Activated B cell treated with CpG ODN at 0.5 μM for 24 hours (primary cell): ENCODE measurements at regions of chr12 and their contacts with region 1.

Region 1: DNA sequence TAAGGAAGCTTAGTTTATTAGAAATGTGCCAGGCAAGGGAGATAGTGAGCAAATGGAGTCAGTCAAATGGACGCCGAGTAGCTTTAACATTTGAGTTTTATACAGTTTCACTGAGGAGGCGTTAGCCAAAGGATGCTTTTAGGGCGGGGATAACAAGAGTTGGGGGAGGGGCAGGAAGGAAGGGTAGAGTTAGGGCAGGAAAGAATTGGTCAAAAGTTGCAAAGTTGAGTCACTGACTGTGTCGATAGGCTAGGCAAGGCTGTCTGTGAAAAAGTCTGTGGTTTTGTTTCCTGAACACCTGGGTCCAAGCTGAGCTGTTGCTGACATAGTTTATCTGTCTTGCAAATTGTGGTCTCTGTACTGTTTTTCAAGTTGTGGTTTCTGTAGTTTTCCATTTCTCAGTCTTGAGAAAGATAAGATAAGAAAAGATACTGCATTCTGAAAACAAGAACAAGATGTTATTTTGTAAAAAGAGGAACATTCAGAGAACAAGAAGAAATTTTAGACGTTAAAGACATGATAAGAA is 62.6 kb upstream of the RESF1 start:
- DNase-seq: peak; percentile 58
- ATAC-seq: peak; percentile 93
- H3K4me3 Mint-ChIP-seq: peak overlapping the region; percentile 73
- H3K27ac Mint-ChIP-seq: peak overlapping the region; percentile 96
- H3K4me1 Mint-ChIP-seq: peaks cover 69% of the 10 kb centered on the region
- H3K27me3 Mint-ChIP-seq: no peaks in the 10 kb centered on the region
- CTCF ChIP-seq: no peak

Region 2: GRCh38 chr12:31715283-31715825 is 181.2 kb before region 1 on chr12:
- CTCF ChIA-PET with region 1: no interaction called
- POLR2A ChIA-PET with region 1: interaction called, 22 read pairs
- intact Hi-C with region 1: no loop called
- DNase-seq: no peak
- ATAC-seq: peak; percentile 93
- H3K4me3 Mint-ChIP-seq: peak overlapping the region; percentile 32
- H3K27ac Mint-ChIP-seq: peak overlapping the region; percentile 85
- H3K4me1 Mint-ChIP-seq: peaks cover 58% of the 10 kb centered on the region
- H3K27me3 Mint-ChIP-seq: no peaks in the 10 kb centered on the region
- CTCF ChIP-seq: no peak

Region 3: DNA sequence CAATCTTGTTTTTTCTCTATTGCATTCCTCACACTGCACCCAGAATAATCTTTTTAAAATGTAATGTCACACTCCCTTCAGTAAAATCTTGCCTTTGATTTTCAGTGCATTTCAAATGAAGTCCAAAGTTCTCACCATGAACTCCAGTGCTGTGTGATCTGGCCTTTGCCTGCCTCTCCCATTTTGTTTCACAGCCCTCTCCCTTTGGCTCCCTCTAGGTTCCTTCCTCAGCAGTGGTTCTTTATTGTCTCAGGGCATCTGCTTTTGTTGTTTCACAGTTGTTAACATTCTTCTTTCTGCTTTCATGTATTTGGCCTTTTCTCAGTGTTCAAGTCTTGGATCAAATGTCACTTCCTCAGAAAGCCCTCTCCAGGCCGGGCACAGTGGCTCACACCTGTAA is 83.3 kb before region 1 on chr12:
- CTCF ChIA-PET with region 1: no interaction called
- POLR2A ChIA-PET with region 1: interaction called, 41 read pairs
- intact Hi-C with region 1: loop called (anchors 1 kb)
- DNase-seq: no peak
- ATAC-seq: no peak
- H3K4me3 Mint-ChIP-seq: no peak overlapping the region
- H3K27ac Mint-ChIP-seq: peak overlapping the region; percentile 69
- H3K4me1 Mint-ChIP-seq: peaks cover 45% of the 10 kb centered on the region
- H3K27me3 Mint-ChIP-seq: no peaks in the 10 kb centered on the region
- CTCF ChIP-seq: no peak

Region 4: GRCh38 chr12:31859232-31859977 is 37.2 kb before region 1 on chr12:
- CTCF ChIA-PET with region 1: interaction called, 3 read pairs
- POLR2A ChIA-PET with region 1: interaction called, 9 read pairs
- intact Hi-C with region 1: loop called (anchors 1 kb)
- DNase-seq: peak; percentile 35
- ATAC-seq: peak; percentile 93
- H3K4me3 Mint-ChIP-seq: peak overlapping the region; percentile 61
- H3K27ac Mint-ChIP-seq: peak overlapping the region; percentile 87
- H3K4me1 Mint-ChIP-seq: peaks cover 31% of the 10 kb centered on the region
- H3K27me3 Mint-ChIP-seq: no peaks in the 10 kb centered on the region
- CTCF ChIP-seq: no peak

Region 5: DNA sequence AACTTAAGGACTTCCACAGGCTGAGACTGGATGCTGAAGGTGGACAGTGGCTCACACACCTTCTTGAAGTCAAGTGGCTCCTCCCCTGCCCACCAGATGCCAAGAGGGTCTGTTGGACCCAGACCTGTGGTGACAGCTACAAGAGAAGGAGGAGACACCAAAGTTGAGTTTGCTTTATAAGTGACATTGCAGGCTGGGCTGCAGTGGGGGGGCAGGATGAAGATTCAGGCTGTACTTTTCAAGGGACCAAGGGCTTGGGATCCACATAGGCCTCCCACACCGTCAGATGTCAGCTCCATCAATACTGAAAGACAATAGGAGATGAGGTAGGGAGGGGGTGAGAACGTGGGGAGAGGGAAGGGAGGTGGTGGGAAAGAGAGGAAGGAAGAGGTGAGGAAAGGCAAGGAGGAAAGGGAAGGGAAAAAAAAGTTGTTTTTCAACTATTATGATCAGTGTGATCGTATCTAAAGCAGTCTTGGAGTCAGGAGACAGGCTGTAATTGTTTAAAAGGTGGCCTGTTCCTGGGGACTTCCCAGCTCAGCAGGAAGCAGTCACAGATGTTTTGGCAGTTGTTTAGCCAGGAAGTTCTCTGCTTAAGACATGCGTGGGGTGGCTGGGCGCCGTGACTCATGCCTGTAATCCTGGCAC is 21.5 kb before region 1 on chr12:
- CTCF ChIA-PET with region 1: interaction called, 5 read pairs
- POLR2A ChIA-PET with region 1: interaction called, 58 read pairs
- intact Hi-C with region 1: loop called (anchors 1 kb)
- DNase-seq: peak; percentile 45
- ATAC-seq: peak; percentile 85
- H3K4me3 Mint-ChIP-seq: peak overlapping the region; percentile 77
- H3K27ac Mint-ChIP-seq: peak overlapping the region; percentile 100
- H3K4me1 Mint-ChIP-seq: peaks cover 77% of the 10 kb centered on the region
- H3K27me3 Mint-ChIP-seq: no peaks in the 10 kb centered on the region
- CTCF ChIP-seq: no peak

Region 6: GRCh38 chr12:31928246-31929026 is 31.9 kb after region 1 on chr12:
- CTCF ChIA-PET with region 1: no interaction called
- POLR2A ChIA-PET with region 1: interaction called, 10 read pairs
- intact Hi-C with region 1: loop called (anchors 2 kb)
- DNase-seq: no peak
- ATAC-seq: peak; percentile 49
- H3K4me3 Mint-ChIP-seq: peak overlapping the region; percentile 83
- H3K27ac Mint-ChIP-seq: peak overlapping the region; percentile 92
- H3K4me1 Mint-ChIP-seq: peaks cover 36% of the 10 kb centered on the region
- H3K27me3 Mint-ChIP-seq: no peaks in the 10 kb centered on the region
- CTCF ChIP-seq: no peak

Region 7: GRCh38 chr12:31973818-31974217 is 77.2 kb after region 1 on chr12:
- CTCF ChIA-PET with region 1: no interaction called
- POLR2A ChIA-PET with region 1: no interaction called
- intact Hi-C with region 1: no loop called
- DNase-seq: no peak
- ATAC-seq: no peak
- H3K4me3 Mint-ChIP-seq: no peak overlapping the region
- H3K27ac Mint-ChIP-seq: no peak overlapping the region
- H3K4me1 Mint-ChIP-seq: peaks cover 34% of the 10 kb centered on the region
- H3K27me3 Mint-ChIP-seq: no peaks in the 10 kb centered on the region
- CTCF ChIP-seq: no peak

Region 8: GRCh38 chr12:32139064-32139421 is 242.5 kb after region 1 on chr12:
- CTCF ChIA-PET with region 1: no interaction called
- POLR2A ChIA-PET with region 1: no interaction called
- intact Hi-C with region 1: loop called (anchors 1 kb)
- DNase-seq: peak; percentile 27
- ATAC-seq: peak; percentile 83
- H3K4me3 Mint-ChIP-seq: peak overlapping the region; percentile 79
- H3K27ac Mint-ChIP-seq: peak overlapping the region; percentile 96
- H3K4me1 Mint-ChIP-seq: peaks cover 74% of the 10 kb centered on the region
- H3K27me3 Mint-ChIP-seq: no peaks in the 10 kb centered on the region
- CTCF ChIP-seq: no peak